Activated B cell treated with CpG ODN at 0.5 μM for 24 hours (primary cell): ENCODE measurements at regions of chr11 and their contacts with region 1.

Region 1: GRCh38 chr11:46238967-46239800 is 38.3 kb upstream of the CREB3L1 start:
- DNase-seq: peak; percentile 80
- ATAC-seq: peak; percentile 73
- H3K4me3 Mint-ChIP-seq: peak overlapping the region; percentile 64
- H3K27ac Mint-ChIP-seq: no peak overlapping the region
- H3K4me1 Mint-ChIP-seq: peaks cover 32% of the 10 kb centered on the region
- H3K27me3 Mint-ChIP-seq: peaks cover 39% of the 10 kb centered on the region
- CTCF ChIP-seq: peak; percentile 89

Region 2: GRCh38 chr11:46121724-46122477 is 117.3 kb before region 1 on chr11:
- CTCF ChIA-PET with region 1: no interaction called
- POLR2A ChIA-PET with region 1: interaction called, 3 read pairs
- intact Hi-C with region 1: loop called (anchors 5 kb)
- DNase-seq: no peak
- ATAC-seq: peak; percentile 47
- H3K4me3 Mint-ChIP-seq: peak overlapping the region; percentile 87
- H3K27ac Mint-ChIP-seq: peak overlapping the region; percentile 91
- H3K4me1 Mint-ChIP-seq: peaks cover 30% of the 10 kb centered on the region
- H3K27me3 Mint-ChIP-seq: no peaks in the 10 kb centered on the region
- CTCF ChIP-seq: no peak

Region 3: GRCh38 chr11:46308631-46309419 is 69.6 kb after region 1 on chr11:
- CTCF ChIA-PET with region 1: interaction called, 119 read pairs
- POLR2A ChIA-PET with region 1: interaction called, 3 read pairs
- intact Hi-C with region 1: loop called (anchors 1 kb)
- DNase-seq: peak; percentile 42
- ATAC-seq: peak; percentile 55
- H3K4me3 Mint-ChIP-seq: no peak overlapping the region
- H3K27ac Mint-ChIP-seq: no peak overlapping the region
- H3K4me1 Mint-ChIP-seq: peaks cover 9% of the 10 kb centered on the region
- H3K27me3 Mint-ChIP-seq: peaks cover 24% of the 10 kb centered on the region
- CTCF ChIP-seq: no peak

Region 4: DNA sequence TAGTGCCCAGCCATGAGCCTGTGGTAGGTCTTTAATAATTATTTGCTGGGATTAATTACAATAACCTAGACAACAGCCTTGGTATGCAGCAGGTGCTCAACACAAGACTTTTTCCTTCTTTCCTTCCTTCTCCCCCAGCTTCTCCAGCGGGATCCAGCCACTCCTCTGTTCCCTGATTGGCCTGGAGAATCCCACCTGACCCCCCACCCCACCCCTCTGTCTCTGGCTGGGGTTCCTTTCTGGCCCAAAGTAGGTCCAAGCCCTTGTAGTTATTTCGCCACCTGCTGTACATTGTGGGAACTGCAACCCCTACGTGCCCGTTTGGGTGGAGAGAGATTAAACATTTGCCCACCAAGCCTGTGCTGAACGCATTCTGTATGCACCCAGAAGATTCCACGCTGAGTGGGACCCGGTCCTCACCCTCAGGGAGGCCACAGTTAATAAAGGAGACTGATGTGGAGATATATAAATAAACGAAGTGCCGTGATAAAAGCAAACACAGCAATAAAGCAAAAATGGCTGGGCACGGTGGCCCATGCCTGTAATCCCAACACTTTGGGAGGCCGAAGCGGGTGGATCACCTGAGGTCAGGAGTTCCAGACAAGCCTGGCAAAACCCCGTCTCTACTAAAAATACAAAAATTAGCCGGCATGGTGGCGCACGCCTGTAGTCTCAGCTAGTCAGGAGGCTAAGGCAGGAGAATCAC is 76.0 kb after region 1 on chr11:
- CTCF ChIA-PET with region 1: interaction called, 119 read pairs
- POLR2A ChIA-PET with region 1: interaction called, 5 read pairs
- intact Hi-C with region 1: loop called (anchors 1 kb)
- DNase-seq: peak; percentile 48
- ATAC-seq: peak; percentile 67
- H3K4me3 Mint-ChIP-seq: no peak overlapping the region
- H3K27ac Mint-ChIP-seq: no peak overlapping the region
- H3K4me1 Mint-ChIP-seq: peaks cover 15% of the 10 kb centered on the region
- H3K27me3 Mint-ChIP-seq: peaks cover 11% of the 10 kb centered on the region
- CTCF ChIP-seq: peak; percentile 82

Region 5: DNA sequence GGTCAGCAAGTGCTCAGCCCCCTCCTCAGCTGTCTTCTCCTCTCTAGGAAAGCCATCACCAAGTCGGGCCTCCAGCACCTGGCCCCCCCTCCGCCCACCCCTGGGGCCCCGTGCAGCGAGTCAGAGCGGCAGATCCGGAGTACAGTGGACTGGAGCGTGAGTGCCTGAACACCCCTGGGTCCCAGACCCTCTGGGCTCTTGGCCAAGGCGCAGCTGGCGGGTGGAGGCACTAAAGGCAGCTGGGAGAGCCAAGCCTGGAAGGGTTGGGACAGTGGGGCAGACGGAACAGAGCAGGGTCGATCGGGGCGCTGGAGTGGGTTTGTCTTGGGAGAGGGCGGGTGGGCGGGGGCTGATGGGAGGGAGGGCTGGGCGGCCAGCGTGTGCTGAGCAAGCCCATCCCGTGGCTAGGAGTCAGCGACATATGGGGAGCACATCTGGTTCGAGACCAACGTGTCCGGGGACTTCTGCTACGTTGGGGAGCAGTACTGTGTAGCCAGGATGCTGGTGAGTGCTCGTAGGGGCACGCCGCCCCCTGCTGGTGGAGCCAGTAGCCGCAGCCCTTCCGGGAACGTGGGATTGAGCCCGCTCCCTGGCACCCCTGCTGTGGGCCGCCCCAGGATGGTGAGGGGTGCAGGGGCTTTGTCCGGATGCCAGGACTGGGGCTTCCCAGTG is 128.2 kb after region 1 on chr11:
- CTCF ChIA-PET with region 1: interaction called, 5 read pairs
- POLR2A ChIA-PET with region 1: no interaction called
- intact Hi-C with region 1: loop called (anchors 1 kb)
- DNase-seq: peak; percentile 62
- ATAC-seq: peak; percentile 84
- H3K4me3 Mint-ChIP-seq: no peak overlapping the region
- H3K27ac Mint-ChIP-seq: no peak overlapping the region
- H3K4me1 Mint-ChIP-seq: peaks cover 10% of the 10 kb centered on the region
- H3K27me3 Mint-ChIP-seq: no peaks in the 10 kb centered on the region
- CTCF ChIP-seq: peak; percentile 19

Region 6: DNA sequence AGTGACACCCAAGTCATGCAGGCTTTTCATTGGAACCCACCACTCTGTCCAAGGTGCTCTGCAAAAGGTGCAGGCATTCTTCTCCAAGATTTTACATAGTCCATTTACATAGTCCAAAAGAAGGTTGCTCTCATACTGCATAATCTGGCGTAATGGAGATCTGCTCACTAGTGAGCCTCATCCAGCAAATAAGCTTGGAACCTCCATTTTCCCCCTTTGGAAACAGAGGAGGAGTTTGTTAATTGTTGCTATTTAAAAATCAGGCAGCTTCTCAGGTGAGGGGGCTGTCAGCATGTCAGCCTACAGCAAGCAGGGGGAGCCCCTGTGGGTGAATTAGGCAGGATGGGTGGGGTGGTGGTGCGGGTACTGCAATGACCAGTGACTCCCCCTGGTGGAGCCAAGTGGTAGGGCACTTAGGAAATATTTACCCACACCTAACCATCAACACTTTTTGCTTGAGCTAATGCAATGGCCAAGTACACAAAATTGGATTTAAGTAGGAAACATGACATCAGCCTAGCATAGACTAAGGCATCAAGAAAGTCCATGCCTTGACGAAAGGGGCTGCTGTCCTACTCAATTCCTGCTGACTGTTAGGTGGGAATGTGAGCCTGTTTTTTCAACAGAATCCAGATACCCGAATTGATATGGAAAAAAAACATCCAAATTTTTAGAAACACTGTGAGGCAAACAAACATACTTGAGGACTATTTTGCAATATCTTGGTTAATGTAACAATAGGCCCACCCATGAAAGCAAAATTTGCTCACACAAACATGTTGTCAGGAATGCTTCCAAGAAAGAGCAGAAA is 290.1 kb after region 1 on chr11:
- CTCF ChIA-PET with region 1: interaction called, 4 read pairs
- POLR2A ChIA-PET with region 1: no interaction called
- intact Hi-C with region 1: loop called (anchors 1 kb)
- DNase-seq: peak; percentile 41
- ATAC-seq: peak; percentile 99
- H3K4me3 Mint-ChIP-seq: no peak overlapping the region
- H3K27ac Mint-ChIP-seq: no peak overlapping the region
- H3K4me1 Mint-ChIP-seq: peaks cover 22% of the 10 kb centered on the region
- H3K27me3 Mint-ChIP-seq: no peaks in the 10 kb centered on the region
- CTCF ChIP-seq: no peak